CD14-positive monocyte (primary cell): ENCODE measurements at regions of chr7 and their contacts with region 1.

Region 1: GRCh38 chr7:148884299-148885022 is 370 bp upstream of the EZH2 start:
- DNase-seq: peak; percentile 89 to 91 (median 91)
- H3K4me3 ChIP-seq: peak overlapping the region; percentile 63 to 99 (median 93)
- H3K4me3 Mint-ChIP-seq: peak overlapping the region; percentile 84 to 91
- H3K27ac ChIP-seq: peak overlapping the region; percentile 63 to 77
- H3K27ac Mint-ChIP-seq: peak overlapping the region; percentile 63 to 87 (median 77)
- H3K4me1 ChIP-seq: peaks cover 12 to 24% of the 10 kb centered on the region in 2 donors
- H3K4me1 Mint-ChIP-seq: peaks cover 22% of the 10 kb centered on the region
- H3K27me3 ChIP-seq: no peaks in the 10 kb centered on the region
- H3K27me3 Mint-ChIP-seq: peaks cover 0 to 5% (median 1%) of the 10 kb centered on the region in 3 donors
- CTCF ChIP-seq: no peak

Region 2: DNA sequence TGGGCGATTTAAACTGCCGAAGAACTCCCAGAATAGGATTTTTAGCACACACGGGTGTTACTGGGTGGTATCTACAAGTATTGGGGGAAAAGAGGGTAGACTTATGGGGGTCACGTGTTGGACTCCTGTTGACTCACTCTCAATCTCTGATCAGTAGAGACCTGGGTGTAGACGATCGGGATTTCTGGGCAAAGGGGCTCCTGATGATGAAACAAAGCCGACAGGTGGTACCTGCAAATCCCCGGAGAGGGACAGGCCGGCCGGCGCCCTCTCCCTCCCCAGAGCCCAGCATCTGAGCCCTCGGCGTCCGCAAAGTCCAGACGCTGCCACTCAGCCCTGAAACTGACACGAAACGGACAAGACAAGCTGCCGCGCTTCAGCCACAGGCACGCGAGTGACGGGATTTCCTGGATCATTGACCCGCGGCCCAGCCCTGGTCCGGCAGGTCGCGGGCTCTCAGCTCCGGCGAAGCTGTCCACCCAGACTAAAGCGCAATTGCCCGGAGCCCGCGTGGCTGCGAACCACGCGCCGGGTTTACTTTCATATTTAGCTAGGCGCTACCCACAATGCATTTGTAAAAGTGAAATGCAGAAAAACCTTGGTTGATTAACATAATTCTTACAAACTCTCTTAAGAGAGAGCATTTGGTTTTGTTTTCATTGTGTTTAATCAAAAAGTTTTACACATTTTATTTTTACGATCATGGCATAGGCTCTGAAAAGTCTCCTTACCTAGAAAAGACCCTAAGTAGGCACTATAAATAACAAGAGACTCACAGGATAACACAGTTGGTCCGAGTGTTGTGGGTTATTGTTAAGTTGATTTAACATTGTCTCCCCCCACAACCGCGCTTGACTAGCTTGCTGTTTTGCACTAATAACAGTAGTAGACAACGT is 56.5 kb after region 1 on chr7:
- intact Hi-C with region 1: loop called in 1 of 2 experiments (anchors 5 kb)
- DNase-seq: peak; percentile 83 to 88 (median 84)
- H3K4me3 ChIP-seq: peak overlapping the region; percentile 60 to 86 (median 76)
- H3K4me3 Mint-ChIP-seq: peak overlapping the region; percentile 93 to 94
- H3K27ac ChIP-seq: peak overlapping the region; percentile 86 to 87
- H3K27ac Mint-ChIP-seq: peak overlapping the region; percentile 87 to 94 (median 92)
- H3K4me1 ChIP-seq: peaks cover 9 to 18% of the 10 kb centered on the region in 2 donors
- H3K4me1 Mint-ChIP-seq: peaks cover 12% of the 10 kb centered on the region
- H3K27me3 ChIP-seq: no peaks in the 10 kb centered on the region
- H3K27me3 Mint-ChIP-seq: peaks cover 0 to 1% (median 0%) of the 10 kb centered on the region in 3 donors
- CTCF ChIP-seq: no peak

Region 3: GRCh38 chr7:148987010-148987750 is 102.7 kb after region 1 on chr7:
- intact Hi-C with region 1: loop called in 1 of 2 experiments (anchors 10 kb)
- DNase-seq: peak; percentile 86 to 93 (median 90)
- H3K4me3 ChIP-seq: peak overlapping the region; percentile 66 to 99 (median 81)
- H3K4me3 Mint-ChIP-seq: peak overlapping the region; percentile 98
- H3K27ac ChIP-seq: peak overlapping the region; percentile 62 to 78
- H3K27ac Mint-ChIP-seq: peak overlapping the region; percentile 85 to 95 (median 91)
- H3K4me1 ChIP-seq: peaks cover 40 to 48% of the 10 kb centered on the region in 2 donors
- H3K4me1 Mint-ChIP-seq: peaks cover 45% of the 10 kb centered on the region
- H3K27me3 ChIP-seq: peaks cover 0 to 3% of the 10 kb centered on the region in 2 donors
- H3K27me3 Mint-ChIP-seq: peaks cover under 1 to 9% (median 2%) of the 10 kb centered on the region in 3 donors
- CTCF ChIP-seq: no peak

Region 4: GRCh38 chr7:149125863-149126661 is 241.6 kb after region 1 on chr7 and contains the start of gene ZNF425:
- intact Hi-C with region 1: loop called (anchors 5 kb)
- DNase-seq: peak; percentile 84 to 87 (median 86)
- H3K4me3 ChIP-seq: peak within 1 kb of the TSS; percentile 74 to 98 (median 91)
- H3K4me3 Mint-ChIP-seq: peak within 1 kb of the TSS; percentile 100
- H3K27ac ChIP-seq: peak within 1 kb of the TSS; percentile 76 to 93
- H3K27ac Mint-ChIP-seq: peak within 1 kb of the TSS; percentile 92 to 98 (median 98)
- H3K4me1 ChIP-seq: peaks cover 14 to 19% of the 10 kb centered on the region in 2 donors
- H3K4me1 Mint-ChIP-seq: peaks cover 18% of the 10 kb centered on the region
- H3K27me3 ChIP-seq: no peaks in the 10 kb centered on the region
- H3K27me3 Mint-ChIP-seq: peaks cover 1 to 3% (median 3%) of the 10 kb centered on the region in 3 donors
- CTCF ChIP-seq: peak; percentile 96
- polyA plus RNA-seq, gene ZNF425: 0.15 to 0.17 TPM in 2 of 3 donors, not detected in the other